Aorta (tissue), 5 donors: ENCODE measurements at regions of chr1 and their contacts with region 1.

Region 1: DNA sequence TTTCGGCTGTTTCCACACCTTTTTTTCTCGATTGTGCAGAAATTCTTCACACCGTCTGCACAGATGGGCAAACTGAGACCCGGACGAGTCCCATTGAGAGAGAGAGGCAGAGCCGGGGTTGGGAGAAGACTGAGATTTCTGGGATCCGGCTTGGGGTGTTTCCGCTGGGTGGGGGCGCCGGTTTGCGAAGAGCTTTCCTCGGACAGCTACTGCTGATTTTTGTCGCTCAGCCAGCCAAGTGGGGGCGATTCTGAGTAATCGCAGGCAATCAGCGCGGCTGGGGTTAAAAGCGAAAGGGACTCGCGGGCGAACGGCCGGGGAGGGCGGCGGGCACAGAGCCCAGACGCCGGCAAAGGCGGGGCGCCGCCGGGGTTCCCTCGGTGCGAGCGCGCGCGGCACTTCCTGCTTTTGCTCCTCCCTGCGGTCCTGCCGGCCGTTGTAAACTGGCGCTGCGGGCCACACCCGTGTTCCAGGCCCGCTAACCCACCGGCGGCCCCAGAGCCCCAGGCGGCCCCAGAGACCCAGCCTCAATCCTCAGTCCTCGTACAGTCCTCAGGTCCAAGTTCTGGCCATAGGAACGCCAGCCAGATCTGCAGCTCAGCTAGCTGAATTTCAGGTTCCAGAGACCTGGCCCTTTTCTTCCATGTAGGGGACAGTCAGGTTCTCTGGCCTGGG is 32.4 kb upstream of the JUN start:
- DNase-seq: peak; percentile 96 to 97
- ATAC-seq: peak; percentile 94
- H3K4me3 ChIP-seq: peak overlapping the region; percentile 57 to 68
- H3K27ac ChIP-seq: peak overlapping the region; percentile 94
- H3K4me1 ChIP-seq: no peaks in the 10 kb centered on the region
- H3K27me3 ChIP-seq: no peaks in the 10 kb centered on the region

Region 2: DNA sequence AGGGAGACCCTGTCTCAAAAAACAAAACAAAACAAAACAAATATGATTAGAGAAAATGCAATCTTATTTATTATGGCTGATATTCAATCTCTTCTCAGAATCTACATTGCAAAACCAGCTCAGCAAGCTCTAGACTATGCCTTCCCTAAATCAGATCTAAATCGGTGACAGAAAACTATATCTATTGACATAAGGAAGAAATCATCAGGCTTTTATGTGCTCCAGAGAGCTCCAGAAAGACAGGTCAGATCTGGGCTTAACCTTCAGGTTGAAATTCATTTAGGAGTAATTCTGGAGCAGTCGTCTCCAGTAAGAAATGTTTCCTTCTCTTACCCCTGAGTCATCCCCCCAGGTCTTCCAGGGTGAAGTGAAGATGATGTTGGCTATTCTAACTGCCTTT is 170.1 kb before region 1 on chr1:
- intact Hi-C with region 1: no loop called
- DNase-seq: no peak
- ATAC-seq: no peak
- H3K4me3 ChIP-seq: no peak overlapping the region
- H3K27ac ChIP-seq: no peak overlapping the region
- H3K4me1 ChIP-seq: no peaks in the 10 kb centered on the region
- H3K27me3 ChIP-seq: no peaks in the 10 kb centered on the region

Region 3: GRCh38 chr1:58768971-58769808 is 47.0 kb before region 1 on chr1:
- intact Hi-C with region 1: no loop called
- DNase-seq: peak; percentile 79 to 95
- ATAC-seq: peak; percentile 71
- H3K4me3 ChIP-seq: no peak overlapping the region
- H3K27ac ChIP-seq: no peak overlapping the region
- H3K4me1 ChIP-seq: peaks cover 0 to 3% of the 10 kb centered on the region in 2 donors
- H3K27me3 ChIP-seq: no peaks in the 10 kb centered on the region

Region 4: DNA sequence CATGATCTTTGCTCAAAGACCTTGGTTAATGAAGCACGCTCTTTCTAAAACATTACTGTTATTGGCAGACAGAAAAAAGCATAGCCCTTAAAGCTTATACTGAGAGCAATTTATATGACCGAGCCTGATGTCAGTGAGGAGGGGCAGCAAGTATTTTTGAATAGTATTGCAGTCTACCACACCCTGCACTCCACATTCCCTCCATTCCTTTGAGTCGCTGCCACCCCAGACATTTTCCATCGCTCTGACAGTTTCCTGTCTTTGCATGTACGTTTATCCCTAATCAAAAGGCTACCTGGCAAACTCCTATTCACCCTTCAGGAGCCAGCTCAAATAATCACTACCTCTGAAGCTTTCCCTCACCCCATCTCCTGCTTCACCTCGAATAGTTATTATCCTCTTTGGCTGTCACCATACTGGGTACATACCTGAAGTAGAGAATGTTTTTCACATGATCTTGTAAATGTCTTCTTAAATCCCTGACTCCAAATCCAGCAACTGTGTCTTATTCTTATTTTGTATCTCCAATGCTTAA is 26.8 kb before region 1 on chr1:
- intact Hi-C with region 1: loop called (anchors 2 kb)
- DNase-seq: no peak
- ATAC-seq: no peak
- H3K4me3 ChIP-seq: no peak overlapping the region
- H3K27ac ChIP-seq: no peak overlapping the region
- H3K4me1 ChIP-seq: no peaks in the 10 kb centered on the region
- H3K27me3 ChIP-seq: no peaks in the 10 kb centered on the region

Region 5: DNA sequence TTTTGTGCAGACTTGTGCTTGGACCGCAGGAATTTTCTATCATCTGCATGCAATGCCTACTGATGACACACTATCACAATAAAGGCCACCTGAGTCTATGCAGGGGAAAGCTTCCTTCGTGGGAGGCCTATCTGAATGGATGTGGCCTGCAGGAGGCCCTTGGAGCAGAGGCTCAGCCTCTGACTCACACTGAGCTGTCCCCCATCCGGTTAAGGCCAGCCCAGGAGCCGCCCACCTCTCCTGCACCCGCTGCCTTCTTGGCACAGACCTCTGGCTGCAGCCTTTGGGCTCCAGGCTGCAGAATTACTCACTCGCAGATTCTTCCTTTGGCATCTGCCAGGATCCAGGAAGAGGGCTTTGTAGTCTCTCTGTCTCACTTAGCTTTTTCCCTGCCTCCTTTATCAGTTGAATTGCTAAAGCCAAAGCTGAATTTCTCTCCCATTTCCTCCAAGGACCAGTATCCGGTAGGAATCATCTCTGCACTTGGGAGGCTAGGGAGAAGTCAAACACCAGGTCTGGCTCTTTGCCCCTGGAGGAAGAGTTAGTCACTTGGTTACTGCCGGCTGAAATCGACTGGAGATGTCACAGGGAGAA is 32.7 kb after region 1 on chr1:
- intact Hi-C with region 1: loop called in 1 of 2 experiments (anchors 2 kb)
- DNase-seq: peak; percentile 91 to 93
- ATAC-seq: peak; percentile 92
- H3K4me3 ChIP-seq: no peak overlapping the region
- H3K27ac ChIP-seq: no peak overlapping the region
- H3K4me1 ChIP-seq: no peaks in the 10 kb centered on the region
- H3K27me3 ChIP-seq: no peaks in the 10 kb centered on the region

Region 6: DNA sequence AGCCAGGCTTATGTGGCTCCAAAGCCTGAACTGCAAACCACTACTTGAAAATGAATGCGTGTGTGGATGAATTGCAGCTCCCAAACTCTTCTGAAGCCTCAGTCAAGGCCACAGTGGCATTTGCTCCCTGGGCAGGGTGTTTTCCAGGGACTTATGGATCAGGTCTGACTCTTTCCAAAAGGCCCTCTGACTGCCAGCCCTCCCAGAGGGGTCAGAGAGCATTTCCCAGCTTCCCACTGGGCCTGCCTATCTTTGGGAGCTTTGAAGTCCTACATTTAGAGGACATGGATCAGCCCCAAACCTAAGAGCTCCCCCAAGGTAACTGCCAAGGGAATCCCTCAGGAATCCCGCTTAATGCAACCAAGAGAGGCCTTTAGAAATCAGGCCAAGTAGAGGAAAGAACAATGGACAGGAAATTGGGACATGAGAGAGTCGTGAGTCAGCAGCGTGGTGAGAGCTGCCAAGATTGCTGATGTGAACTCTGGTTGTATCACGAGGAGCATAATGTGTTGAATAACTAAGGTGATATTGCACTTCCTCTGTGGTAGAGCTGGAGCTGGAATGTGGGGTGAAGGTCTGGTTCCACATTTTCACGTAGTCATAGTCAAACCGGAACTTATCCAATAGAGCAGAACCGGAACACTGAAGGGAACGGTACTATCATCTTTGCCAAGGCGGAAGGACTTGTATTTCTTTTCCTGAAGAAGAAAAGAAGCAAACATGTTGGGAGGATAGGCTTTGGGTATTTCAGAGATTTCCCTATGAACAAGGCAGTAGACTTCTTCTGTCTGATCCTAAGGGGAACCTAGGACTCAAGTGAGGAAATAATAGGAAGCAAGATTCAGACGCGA is 67.1 kb after region 1 on chr1:
- intact Hi-C with region 1: loop called (anchors 5 kb)
- DNase-seq: peak; percentile 85
- ATAC-seq: peak; percentile 44
- H3K4me3 ChIP-seq: no peak overlapping the region
- H3K27ac ChIP-seq: peak overlapping the region in 1 of 2 donors; percentile 5
- H3K4me1 ChIP-seq: peaks cover 2 to 4% of the 10 kb centered on the region in 2 donors
- H3K27me3 ChIP-seq: no peaks in the 10 kb centered on the region